Activated CD4-positive, alpha-beta memory T cell treated with anti-CD3 and anti-CD28 coated beads for 36 hours (primary cell): ENCODE measurements at regions of chr14 and their contacts with region 1.

Region 1: DNA sequence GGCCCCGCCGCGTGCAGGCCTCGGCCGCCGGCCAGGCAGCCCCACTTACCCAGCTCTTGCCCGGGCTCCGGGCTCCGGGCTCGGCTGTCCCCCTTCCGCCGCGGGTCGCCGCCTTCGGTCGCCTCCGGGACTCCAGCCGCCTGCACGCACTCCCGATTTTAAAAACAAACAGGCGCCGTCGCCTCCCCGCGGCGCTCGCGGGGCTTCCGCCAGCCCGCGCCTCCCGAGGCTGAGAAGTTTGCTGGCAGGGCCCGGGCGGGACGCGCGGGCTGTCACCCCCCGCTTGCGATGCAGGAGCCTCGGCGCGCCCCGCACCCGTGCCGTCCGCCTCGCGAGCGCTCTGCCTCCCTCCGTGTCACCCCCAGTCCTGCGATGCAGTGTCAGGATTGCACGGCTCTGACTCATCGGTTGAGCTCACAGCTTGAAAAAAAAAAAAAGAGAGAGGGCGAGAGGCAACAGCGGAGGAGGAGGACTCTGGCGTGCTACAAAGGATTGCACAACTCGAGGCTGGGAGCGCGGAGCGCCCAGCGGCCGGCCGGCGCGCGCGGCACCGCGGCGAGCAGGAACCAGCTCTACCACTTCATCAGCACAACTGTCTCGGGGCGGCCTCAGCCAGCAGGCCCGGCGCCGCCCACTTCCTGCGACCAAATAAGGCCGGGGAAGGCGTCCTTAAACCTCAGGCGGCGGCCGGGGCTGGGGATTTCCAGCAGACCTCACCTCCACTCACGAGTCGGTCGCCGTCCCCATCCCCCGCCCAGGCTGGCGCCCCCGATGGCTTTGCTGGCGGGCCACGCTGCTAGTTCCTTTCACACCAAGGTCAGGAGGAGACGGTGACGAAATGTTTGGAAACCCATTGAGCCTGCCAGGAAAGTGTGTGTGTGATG is 45.8 kb upstream of the PNMA1 start:
- DNase-seq: peak; percentile 97
- H3K4me3 Mint-ChIP-seq: peak overlapping the region; percentile 84
- H3K27ac Mint-ChIP-seq: peak overlapping the region; percentile 99
- H3K4me1 Mint-ChIP-seq: peaks cover 74% of the 10 kb centered on the region
- H3K27me3 Mint-ChIP-seq: no peaks in the 10 kb centered on the region

Region 2: GRCh38 chr14:73662487-73662943 is 97.4 kb before region 1 on chr14:
- CTCF ChIA-PET with region 1: no interaction called
- POLR2A ChIA-PET with region 1: no interaction called
- intact Hi-C with region 1: no loop called
- DNase-seq: no peak
- H3K4me3 Mint-ChIP-seq: no peak overlapping the region
- H3K27ac Mint-ChIP-seq: no peak overlapping the region
- H3K4me1 Mint-ChIP-seq: no peaks in the 10 kb centered on the region
- H3K27me3 Mint-ChIP-seq: no peaks in the 10 kb centered on the region

Region 3: GRCh38 chr14:73728717-73729330 is 31.1 kb before region 1 on chr14:
- CTCF ChIA-PET with region 1: interaction called, 44 read pairs
- POLR2A ChIA-PET with region 1: interaction called, 13 read pairs
- intact Hi-C with region 1: loop called (anchors 1 kb)
- DNase-seq: peak; percentile 90
- H3K4me3 Mint-ChIP-seq: no peak overlapping the region
- H3K27ac Mint-ChIP-seq: peak overlapping the region; percentile 78
- H3K4me1 Mint-ChIP-seq: peaks cover 35% of the 10 kb centered on the region
- H3K27me3 Mint-ChIP-seq: no peaks in the 10 kb centered on the region

Region 4: GRCh38 chr14:73771848-73772638 is 12.1 kb after region 1 on chr14:
- CTCF ChIA-PET with region 1: interaction called, 44 read pairs
- POLR2A ChIA-PET with region 1: interaction called, 128 read pairs
- intact Hi-C with region 1: loop called (anchors 1 kb)
- DNase-seq: peak; percentile 93
- H3K4me3 Mint-ChIP-seq: peak overlapping the region; percentile 55
- H3K27ac Mint-ChIP-seq: peak overlapping the region; percentile 90
- H3K4me1 Mint-ChIP-seq: peaks cover 66% of the 10 kb centered on the region
- H3K27me3 Mint-ChIP-seq: no peaks in the 10 kb centered on the region

Region 5: GRCh38 chr14:73825551-73826188 is 65.7 kb after region 1 on chr14:
- CTCF ChIA-PET with region 1: interaction called, 29 read pairs
- POLR2A ChIA-PET with region 1: interaction called, 4 read pairs
- intact Hi-C with region 1: loop called (anchors 1 kb)
- DNase-seq: peak; percentile 87
- H3K4me3 Mint-ChIP-seq: no peak overlapping the region
- H3K27ac Mint-ChIP-seq: no peak overlapping the region
- H3K4me1 Mint-ChIP-seq: peaks cover 15% of the 10 kb centered on the region
- H3K27me3 Mint-ChIP-seq: no peaks in the 10 kb centered on the region

Region 6: DNA sequence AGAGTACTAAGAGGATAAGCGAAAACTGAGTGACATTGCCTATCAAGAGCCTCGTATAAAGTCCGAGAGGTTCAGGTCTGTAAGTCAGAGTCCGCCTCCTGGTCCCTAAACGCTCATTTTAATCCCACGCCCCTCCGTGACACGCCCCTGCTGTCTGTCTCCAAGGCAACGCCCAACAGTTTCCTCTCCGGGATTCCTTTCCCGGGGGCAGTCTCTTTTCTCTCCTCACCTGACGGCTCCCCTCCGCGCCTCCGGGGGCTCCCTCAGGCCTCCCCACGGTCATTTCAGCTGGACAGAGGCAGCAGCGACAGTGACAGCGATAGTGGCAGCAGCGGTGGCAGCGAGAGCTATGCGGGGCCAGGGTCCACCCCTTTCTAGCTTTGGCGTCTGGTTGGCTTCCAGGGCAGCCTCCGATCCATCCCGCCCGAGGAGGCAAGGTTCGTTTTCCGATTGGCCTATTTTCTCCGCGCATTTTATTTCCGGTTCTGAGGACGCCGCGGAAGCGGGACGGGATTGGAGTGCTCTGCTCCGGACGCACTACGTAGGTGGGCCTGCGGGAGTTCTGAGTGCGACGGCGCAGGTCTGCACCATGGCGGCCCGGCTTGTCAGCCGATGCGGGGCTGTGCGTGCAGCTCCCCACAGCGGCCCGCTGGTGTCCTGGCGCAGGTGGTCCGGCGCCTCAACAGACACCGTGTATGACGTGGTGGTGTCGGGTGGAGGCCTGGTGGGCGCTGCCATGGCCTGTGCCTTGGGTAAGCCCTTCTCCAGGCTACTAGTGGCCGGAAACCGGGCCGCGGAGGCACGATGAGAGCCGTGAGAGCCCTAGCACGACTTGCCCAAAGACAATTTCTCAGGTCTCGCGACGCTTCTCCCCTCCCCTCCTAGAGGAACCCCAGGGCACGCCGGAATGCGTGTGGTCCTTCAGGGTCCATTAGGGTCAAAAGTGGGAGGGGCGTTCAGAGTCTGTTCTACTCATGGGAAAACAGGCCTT is 190.1 kb after region 1 on chr14 and contains the starts of genes COQ6 and FAM161B:
- CTCF ChIA-PET with region 1: no interaction called
- POLR2A ChIA-PET with region 1: interaction called, 3 read pairs
- intact Hi-C with region 1: loop called (anchors 1 kb)
- DNase-seq: peak; percentile 96
- H3K4me3 Mint-ChIP-seq: peak within 1 kb of the TSS; percentile 97
- H3K27ac Mint-ChIP-seq: peak within 1 kb of the TSS; percentile 86
- H3K4me1 Mint-ChIP-seq: peaks cover 17% of the 10 kb centered on the region
- H3K27me3 Mint-ChIP-seq: no peaks in the 10 kb centered on the region
- total RNA-seq, gene COQ6: 18.7 to 19.3 TPM
- total RNA-seq, gene FAM161B: 1.1 to 1.4 TPM